ENCODE measurements at regions of chr6 and their contacts with region 1.

Region 1: GRCh38 chr6:89371849-89372505 is 19.5 kb upstream of the UBE2J1 start:
- DNase-seq: peak; percentile 77 to 88
- ATAC-seq: peak; percentile 79 to 87 (median 82)
- H3K4me3 ChIP-seq: no peak overlapping the region
- H3K27ac ChIP-seq: peak overlapping the region; percentile 53
- H3K4me1 ChIP-seq: peaks cover 24% of the 10 kb centered on the region
- H3K27me3 ChIP-seq: no peaks in the 10 kb centered on the region
- CTCF ChIP-seq: peak; percentile 96

Region 2: GRCh38 chr6:89311853-89312531 is 60.0 kb before region 1 on chr6:
- intact Hi-C with region 1: loop called in 1 of 2 experiments (anchors 5 kb)
- DNase-seq: peak; percentile 55 to 68
- ATAC-seq: peak; percentile 50 to 71 (median 67)
- H3K4me3 ChIP-seq: no peak overlapping the region
- H3K27ac ChIP-seq: peak overlapping the region; percentile 62
- H3K4me1 ChIP-seq: peaks cover 26% of the 10 kb centered on the region
- H3K27me3 ChIP-seq: no peaks in the 10 kb centered on the region
- CTCF ChIP-seq: peak; percentile 53

Region 3: DNA sequence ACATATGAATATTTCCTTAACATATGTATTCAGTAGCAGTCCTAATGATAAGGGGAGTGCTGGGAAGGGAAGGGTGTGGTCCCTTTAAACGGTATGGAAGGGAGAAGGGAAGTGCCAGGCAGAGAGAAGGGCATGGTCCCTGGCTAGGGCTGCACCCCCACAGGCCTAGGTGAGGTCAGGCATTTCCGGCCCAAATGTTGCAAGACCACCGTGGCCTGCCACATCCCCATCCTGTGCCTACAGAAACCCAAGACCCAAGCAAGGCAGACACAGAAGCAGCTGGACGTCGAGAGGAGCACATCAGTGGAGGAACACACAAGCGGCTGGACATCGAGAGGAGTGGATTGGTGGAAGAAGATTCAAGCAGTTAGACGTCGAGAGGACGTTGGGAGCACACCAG is 34.2 kb after region 1 on chr6:
- intact Hi-C with region 1: loop called (anchors 5 kb)
- DNase-seq: no peak
- ATAC-seq: peak in 3 of 4 donors; percentile 12 to 14 (median 13)
- H3K4me3 ChIP-seq: peak overlapping the region; percentile 41
- H3K27ac ChIP-seq: peak overlapping the region; percentile 99
- H3K4me1 ChIP-seq: peaks cover 56% of the 10 kb centered on the region
- H3K27me3 ChIP-seq: no peaks in the 10 kb centered on the region
- CTCF ChIP-seq: no peak

Region 4: DNA sequence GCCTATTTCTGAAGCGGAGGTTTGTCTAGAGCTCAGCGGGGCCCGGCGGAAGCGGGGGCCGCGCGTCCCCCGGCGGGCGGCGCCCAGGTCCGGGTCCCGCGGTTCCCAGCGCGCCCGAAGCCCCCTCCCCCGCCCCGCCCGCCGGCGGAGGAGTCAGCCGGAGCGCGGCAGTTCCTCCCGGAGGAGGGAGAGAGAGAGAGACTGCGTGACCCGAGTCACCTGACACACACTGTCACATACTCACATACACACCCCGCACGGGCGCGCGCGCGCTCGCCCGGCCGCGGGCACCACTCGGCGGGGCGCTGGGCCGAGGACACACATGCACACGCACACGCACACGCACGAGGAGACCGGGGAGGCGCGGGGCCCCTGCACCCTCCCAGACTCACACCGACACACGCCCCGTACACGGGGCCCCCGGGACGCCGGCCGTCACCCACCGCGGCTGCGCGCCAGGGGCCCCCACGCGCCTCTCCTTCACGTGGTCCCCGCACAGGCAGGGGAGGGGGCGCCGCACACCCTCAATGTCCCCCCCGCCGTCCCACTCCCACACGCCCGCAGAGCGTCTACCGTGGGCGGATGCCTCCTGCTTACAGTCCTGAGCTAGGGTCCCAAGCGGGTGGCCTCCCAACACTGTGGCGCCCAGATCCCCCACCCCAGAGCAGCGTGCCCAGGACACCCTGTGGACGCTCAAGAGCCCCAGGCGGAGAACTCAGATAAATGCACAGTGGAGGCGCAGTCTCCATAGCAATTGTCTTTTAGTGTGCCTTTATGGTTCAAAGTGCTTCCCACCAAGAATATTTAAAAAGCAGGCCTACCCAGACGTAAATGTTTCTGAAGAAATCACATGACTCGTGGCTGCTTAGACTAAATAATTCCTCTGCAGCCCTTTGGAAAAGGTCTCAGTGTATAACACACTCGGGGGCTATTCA is 40.4 kb after region 1 on chr6 and contains the start of gene RRAGD:
- intact Hi-C with region 1: loop called (anchors 5 kb)
- DNase-seq: peak; percentile 73 to 88
- ATAC-seq: peak; percentile 84 to 90 (median 89)
- H3K4me3 ChIP-seq: peak within 1 kb of the TSS; percentile 90
- H3K27ac ChIP-seq: peak within 1 kb of the TSS; percentile 99
- H3K4me1 ChIP-seq: peaks cover 37% of the 10 kb centered on the region
- H3K27me3 ChIP-seq: no peaks in the 10 kb centered on the region
- CTCF ChIP-seq: no peak
- total RNA-seq, gene RRAGD: 105 to 148 (median 125) TPM

Region 5: DNA sequence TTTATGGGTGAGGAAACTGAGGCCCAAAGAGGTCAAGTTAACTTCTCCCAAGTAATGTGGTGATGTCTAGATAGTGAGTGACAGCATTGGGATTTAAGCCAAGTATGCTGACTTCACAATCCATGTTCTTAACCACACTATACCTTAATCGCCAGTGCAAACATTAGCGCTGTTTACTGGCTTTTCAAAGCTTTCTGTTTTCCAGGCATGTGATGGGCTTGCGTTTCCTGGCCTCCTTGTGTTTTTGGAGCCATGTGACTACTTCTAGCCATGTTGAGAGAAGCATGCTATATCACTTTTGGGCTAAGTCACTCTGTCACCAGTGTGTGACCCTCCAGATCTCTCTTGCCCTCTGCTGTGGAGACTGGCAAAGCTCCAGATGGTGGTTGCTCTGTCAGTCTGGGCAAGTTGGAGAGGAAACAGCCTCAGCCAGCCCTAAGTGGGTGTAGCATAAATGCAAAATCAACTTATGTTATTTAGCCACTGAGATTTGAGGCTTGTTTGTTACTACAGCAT is 137.8 kb after region 1 on chr6:
- intact Hi-C with region 1: no loop called
- DNase-seq: no peak
- ATAC-seq: no peak
- H3K4me3 ChIP-seq: no peak overlapping the region
- H3K27ac ChIP-seq: no peak overlapping the region
- H3K4me1 ChIP-seq: peaks cover 8% of the 10 kb centered on the region
- H3K27me3 ChIP-seq: no peaks in the 10 kb centered on the region
- CTCF ChIP-seq: no peak

Region 6: GRCh38 chr6:89610149-89610642 is 238.2 kb after region 1 on chr6:
- intact Hi-C with region 1: loop called (anchors 5 kb)
- DNase-seq: peak; percentile 68 to 79
- ATAC-seq: peak; percentile 71 to 92 (median 84)
- H3K4me3 ChIP-seq: no peak overlapping the region
- H3K27ac ChIP-seq: no peak overlapping the region
- H3K4me1 ChIP-seq: no peaks in the 10 kb centered on the region
- H3K27me3 ChIP-seq: no peaks in the 10 kb centered on the region
- CTCF ChIP-seq: peak; percentile 90